PC-3 (cell line): ENCODE measurements at regions of chr11 and their contacts with region 1.

Region 1: GRCh38 chr11:75583718-75584658 is 21.9 kb downstream of the SERPINH1 start:
- DNase-seq: no peak
- ATAC-seq: peak; percentile 23
- H3K4me3 ChIP-seq: peak overlapping the region; percentile 85
- H3K27ac ChIP-seq: no peak overlapping the region
- H3K4me1 ChIP-seq: peaks cover 8% of the 10 kb centered on the region
- H3K27me3 ChIP-seq: no peaks in the 10 kb centered on the region
- CTCF ChIP-seq: no peak

Region 2: DNA sequence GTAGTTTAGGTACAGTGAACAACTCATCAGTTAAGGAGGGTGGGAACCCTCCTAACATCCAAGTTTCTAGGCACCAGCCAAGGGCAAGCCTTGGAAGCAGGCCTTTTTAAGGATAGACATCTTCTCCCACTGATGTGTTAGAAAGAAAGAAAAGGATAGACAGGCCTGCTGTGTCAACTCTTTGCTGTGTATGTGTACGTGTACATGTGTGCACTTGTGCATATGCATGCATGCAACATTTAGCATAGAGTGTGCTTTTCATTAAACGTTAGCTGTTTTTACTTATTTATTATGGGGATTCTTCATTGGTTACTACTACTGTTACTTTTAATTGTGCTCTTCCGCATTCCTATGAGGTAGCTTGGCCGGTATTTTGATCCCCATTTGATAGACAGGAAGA is 799.3 kb before region 1 on chr11:
- CTCF ChIA-PET with region 1: no interaction called
- POLR2A ChIA-PET with region 1: interaction called, 17 read pairs
- intact Hi-C with region 1: no loop called
- DNase-seq: no peak
- ATAC-seq: no peak
- H3K4me3 ChIP-seq: no peak overlapping the region
- H3K27ac ChIP-seq: no peak overlapping the region
- H3K4me1 ChIP-seq: peaks cover 13% of the 10 kb centered on the region
- H3K27me3 ChIP-seq: no peaks in the 10 kb centered on the region
- CTCF ChIP-seq: no peak

Region 3: DNA sequence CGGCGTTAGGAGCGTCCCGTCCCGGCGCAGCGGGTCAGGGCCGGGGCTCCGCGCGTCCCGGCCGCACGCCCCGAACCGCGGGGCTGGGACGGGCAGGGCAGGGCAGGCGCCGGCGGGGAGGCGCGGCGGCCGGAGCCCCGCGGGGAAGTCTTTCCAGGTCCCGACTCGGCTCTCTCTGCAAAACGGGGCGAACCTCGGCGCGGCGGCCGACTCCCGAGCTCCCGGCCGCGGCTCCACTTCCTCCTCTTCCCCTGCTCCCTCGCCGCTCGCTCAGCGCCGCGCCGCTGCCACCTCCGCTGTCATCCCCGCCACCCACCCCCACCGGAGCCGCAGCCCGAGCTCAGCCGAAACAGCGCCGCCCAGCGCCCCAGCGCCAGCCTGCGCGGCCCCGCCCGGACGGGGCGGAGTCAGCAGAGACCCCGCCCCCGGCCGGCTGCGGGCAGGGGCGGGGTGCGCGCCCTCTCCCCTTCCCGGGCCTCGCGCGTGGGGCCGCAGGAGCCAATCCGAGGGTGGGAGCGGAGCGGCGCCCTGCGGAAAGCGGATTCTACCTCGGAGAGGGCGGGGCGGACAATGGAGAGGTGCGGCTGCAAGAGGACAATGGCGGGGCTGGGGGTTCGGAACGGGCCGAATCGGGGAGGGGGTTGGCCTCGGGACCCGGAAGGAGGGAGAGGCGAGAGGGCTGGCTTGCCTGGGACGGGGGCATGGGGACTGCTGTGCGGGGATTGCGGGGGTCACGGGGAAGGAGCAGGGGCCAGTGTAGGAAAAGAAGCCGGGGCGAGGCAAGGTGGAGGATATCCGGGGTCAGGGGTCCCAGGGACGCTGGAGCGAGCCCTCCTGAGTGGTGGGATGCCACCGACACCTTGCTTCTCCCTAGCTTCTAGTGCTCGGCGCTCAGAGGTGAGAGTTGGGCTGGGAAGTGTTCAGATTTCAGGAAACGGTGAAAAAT is 58.1 kb before region 1 on chr11 and contains the start of gene GDPD5:
- CTCF ChIA-PET with region 1: no interaction called
- POLR2A ChIA-PET with region 1: interaction called, 13 read pairs
- intact Hi-C with region 1: no loop called
- DNase-seq: peak; percentile 95
- ATAC-seq: peak; percentile 88
- H3K4me3 ChIP-seq: peak within 1 kb of the TSS; percentile 96
- H3K27ac ChIP-seq: no peak within 1 kb of the TSS
- H3K4me1 ChIP-seq: peaks cover 20% of the 10 kb centered on the region
- H3K27me3 ChIP-seq: no peaks in the 10 kb centered on the region
- CTCF ChIP-seq: peak; percentile 68
- total RNA-seq, gene GDPD5: 21.4 and 31.1 TPM in 2 replicates

Region 4: DNA sequence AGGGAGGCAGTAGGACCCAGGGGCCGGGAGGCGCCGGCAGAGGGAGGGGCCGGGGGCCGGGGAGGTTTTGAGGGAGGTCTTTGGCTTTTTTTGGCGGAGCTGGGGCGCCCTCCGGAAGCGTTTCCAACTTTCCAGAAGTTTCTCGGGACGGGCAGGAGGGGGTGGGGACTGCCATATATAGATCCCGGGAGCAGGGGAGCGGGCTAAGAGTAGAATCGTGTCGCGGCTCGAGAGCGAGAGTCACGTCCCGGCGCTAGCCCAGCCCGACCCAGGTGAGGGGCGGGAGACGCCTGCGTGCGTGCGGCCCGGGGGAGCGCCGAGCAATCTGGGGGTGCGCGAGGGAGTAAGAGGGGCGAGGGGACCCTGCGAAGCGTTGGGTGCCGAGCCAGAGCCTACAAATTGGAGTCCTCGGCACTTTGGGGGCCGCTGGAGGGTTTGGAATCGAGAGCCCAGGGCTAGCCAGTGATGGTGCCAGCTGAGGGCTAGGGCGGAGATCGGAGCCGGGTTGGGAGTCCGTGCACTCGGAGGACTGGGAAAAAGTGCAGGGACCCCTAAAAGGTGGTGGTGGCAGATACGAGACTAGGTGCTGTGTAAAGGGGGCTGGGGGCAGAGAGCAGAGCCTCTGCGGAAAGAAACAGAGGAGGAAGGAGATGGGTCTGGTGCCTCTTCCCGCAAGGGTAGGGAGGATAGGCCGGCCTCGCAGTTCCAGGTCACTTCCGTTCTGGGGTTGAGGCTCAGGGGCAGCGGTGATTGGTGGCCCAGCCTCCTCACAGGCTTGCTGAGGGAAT is 21.7 kb before region 1 on chr11 and contains the start of gene SERPINH1:
- CTCF ChIA-PET with region 1: no interaction called
- POLR2A ChIA-PET with region 1: no interaction called
- intact Hi-C with region 1: no loop called
- DNase-seq: peak; percentile 88
- ATAC-seq: peak; percentile 88
- H3K4me3 ChIP-seq: peak within 1 kb of the TSS; percentile 80
- H3K27ac ChIP-seq: peak within 1 kb of the TSS; percentile 43
- H3K4me1 ChIP-seq: peaks cover 31% of the 10 kb centered on the region
- H3K27me3 ChIP-seq: no peaks in the 10 kb centered on the region
- CTCF ChIP-seq: no peak
- total RNA-seq, gene SERPINH1: 117 and 121 TPM in 2 replicates

Region 5: DNA sequence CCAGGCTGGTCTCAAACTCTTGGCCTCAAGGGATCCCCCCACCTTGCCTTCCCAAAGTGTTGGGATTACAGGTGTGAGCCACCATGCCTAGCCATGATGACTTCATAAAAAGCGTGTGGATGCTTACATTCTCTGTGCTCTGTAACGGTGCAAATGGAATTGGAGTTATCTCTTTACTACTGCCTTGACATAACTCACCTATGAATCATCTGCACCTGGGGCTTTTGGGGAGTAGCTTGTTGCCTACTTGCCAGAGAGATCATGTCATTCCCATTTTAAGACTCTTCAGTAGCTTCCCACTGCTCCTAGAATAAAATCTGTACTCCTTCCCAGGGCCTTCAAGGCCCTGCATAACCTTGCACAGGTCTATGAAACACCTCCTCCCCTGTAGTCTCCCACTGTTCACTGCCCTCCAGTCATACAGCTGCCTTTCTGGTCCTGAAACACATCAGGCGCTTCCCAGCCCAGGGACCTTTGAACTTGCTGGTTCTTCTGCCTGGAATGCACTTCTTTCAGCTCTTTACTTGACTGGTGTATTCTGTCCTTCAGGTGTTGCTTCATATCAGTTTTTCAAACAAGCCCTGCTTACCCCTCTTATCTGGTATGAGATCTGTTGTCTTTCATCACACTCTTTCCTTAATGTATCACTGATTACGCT is 114.0 kb after region 1 on chr11:
- CTCF ChIA-PET with region 1: no interaction called
- POLR2A ChIA-PET with region 1: no interaction called
- intact Hi-C with region 1: no loop called
- DNase-seq: peak; percentile 80
- ATAC-seq: peak; percentile 64
- H3K4me3 ChIP-seq: no peak overlapping the region
- H3K27ac ChIP-seq: no peak overlapping the region
- H3K4me1 ChIP-seq: peaks cover 6% of the 10 kb centered on the region; the same call in 1 of the 2 replicates
- H3K27me3 ChIP-seq: no peaks in the 10 kb centered on the region
- CTCF ChIP-seq: no peak